ENCODE measurements at regions of chr9 and their contacts with region 1.

Region 1: GRCh38 chr9:137974588-137975526 is 97.3 kb downstream of the CACNA1B start:
- DNase-seq: no peak
- ATAC-seq: no peak; the same call in 2 of the 3 replicates
- H3K4me3 ChIP-seq: no peak overlapping the region
- H3K27ac ChIP-seq: no peak overlapping the region
- H3K4me1 ChIP-seq: peaks cover 5% of the 10 kb centered on the region; the same call in 1 of the 2 replicates
- H3K27me3 ChIP-seq: peaks cover 0 to 19% of the 10 kb centered on the region in 2 experiments; a peak in 4 of 5 replicates
- CTCF ChIP-seq: no peak
- EP300 ChIP-seq: no peak
- POLR2A ChIP-seq: no peak
- RAD21 ChIP-seq: no peak

Region 2: DNA sequence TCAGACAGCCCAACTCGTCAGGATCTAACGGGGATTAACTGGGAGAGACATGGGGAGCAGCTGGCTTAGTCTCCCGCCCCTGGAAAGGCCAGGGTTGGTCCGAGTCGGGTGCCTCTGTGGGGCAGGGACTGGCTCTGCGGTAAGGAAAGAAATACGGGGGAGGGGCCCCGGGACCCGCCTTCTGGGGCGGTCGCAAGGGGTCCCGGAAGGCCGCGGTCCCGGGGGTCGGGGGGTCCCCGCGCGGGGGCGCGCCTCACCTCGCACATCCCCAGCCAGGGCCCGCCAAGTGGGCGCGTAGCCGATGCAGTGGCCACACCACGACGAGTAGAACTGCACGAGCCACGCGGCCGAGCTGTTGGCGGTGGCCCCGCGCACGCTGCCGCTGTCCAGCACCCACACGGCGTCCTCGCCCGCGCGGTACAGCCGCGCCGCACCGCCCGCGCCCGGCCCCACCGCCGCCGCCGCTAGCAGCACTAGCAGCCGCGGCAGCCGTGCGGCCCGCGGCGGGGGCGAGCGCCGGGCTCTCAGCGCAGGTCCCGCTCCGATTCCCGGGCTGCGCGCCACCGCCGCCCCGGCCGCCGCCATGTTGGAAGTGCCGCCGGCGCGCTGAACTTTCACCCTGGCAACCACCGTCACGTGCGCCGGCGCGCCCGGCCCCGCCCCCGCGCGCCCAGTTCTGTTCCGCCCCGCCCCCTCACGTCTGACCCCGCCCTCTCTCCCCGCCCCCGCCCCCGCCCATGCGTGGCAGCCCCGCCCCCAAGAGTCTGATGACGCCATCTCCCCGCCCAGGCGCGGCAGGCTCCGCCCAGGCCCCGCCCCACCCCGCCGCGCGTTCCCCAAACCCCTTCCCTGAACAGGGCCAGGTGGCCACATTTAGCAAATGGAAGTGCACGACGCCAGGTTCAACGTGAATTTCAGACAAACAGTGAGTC is 1729.4 kb before region 1 on chr9 and contains the start of gene QSOX2:
- CTCF ChIA-PET with region 1: no interaction called
- POLR2A ChIA-PET with region 1: no interaction called
- in situ Hi-C with region 1: no loop called
- intact Hi-C with region 1: loop called (anchors 5 kb)
- DNase-seq: peak; percentile 46
- ATAC-seq: peak; percentile 62
- H3K4me3 ChIP-seq: peak within 1 kb of the TSS; percentile 63 to 91 (median 88)
- H3K27ac ChIP-seq: peak within 1 kb of the TSS; percentile 70
- H3K4me1 ChIP-seq: peaks cover 56% of the 10 kb centered on the region
- H3K27me3 ChIP-seq: peaks cover 16 to 45% of the 10 kb centered on the region in 2 experiments
- CTCF ChIP-seq: no peak
- EP300 ChIP-seq: no peak
- POLR2A ChIP-seq: peak in 1 of 2 experiments; percentile 71; a peak in 2 of 4 replicates
- RAD21 ChIP-seq: peak; percentile 37; the same call in 1 of the 2 replicates
- total RNA-seq, gene QSOX2: 10.1 and 27.1 TPM in 2 replicates